Stomach (tissue), 19 donors: ENCODE measurements at regions of chr17 and their contacts with region 1.

Region 1: DNA sequence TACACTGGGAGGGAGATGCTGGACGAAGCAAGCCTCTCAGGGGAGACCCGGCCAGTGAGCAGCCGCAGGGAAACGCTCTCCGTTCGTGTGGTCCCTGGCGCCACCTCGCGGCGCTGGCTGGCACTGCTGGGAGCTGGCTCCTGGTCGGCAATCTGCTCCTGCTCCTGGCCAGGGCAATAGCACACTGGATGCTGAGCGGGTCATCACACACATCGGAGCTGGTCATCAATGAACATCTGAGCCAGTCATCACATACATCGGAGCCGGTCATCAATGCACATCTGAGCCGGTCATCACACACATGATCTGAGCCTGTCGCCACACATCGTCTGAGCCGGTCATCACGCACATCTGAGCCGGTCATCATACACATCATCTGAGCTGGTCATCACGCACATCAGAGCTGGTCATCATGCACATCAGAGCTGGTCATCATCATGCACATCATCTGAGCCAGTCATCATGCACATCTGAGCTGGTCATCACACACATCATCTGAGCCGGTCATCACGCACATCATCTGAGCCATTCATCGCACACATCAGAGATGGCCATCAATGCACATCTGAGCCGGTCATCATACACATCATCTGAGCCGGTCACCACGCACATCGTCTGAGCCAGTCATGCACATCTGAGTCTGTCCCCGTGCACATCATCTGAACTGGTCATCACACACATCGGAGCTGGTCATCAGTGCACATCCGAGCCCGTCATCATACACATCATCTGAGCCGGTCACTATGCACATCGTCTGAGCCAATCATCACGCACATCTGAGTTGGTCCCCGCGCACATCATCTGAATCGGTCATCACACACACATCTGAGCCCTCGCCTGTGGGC is 217.3 kb downstream of the RBFOX3 start:
- DNase-seq: peak; percentile 83 to 92
- H3K4me3 ChIP-seq: no peak overlapping the region
- H3K27ac ChIP-seq: no peak overlapping the region
- H3K4me1 ChIP-seq: peaks cover 0 to 7% (median 2%) of the 10 kb centered on the region in 4 donors
- H3K27me3 ChIP-seq: peaks cover 5 to 98% (median 88%) of the 10 kb centered on the region in 3 donors
- CTCF ChIP-seq: peak in 5 of 7 experiments; percentile 71 to 88 (median 84)
- EP300 ChIP-seq: no peak
- POLR2A ChIP-seq: no peak

Region 2: GRCh38 chr17:79087428-79088143 is 306.0 kb before region 1 on chr17:
- intact Hi-C with region 1: loop called (anchors 5 kb)
- DNase-seq: peak; percentile 79 to 87
- H3K4me3 ChIP-seq: no peak overlapping the region
- H3K27ac ChIP-seq: no peak overlapping the region
- H3K4me1 ChIP-seq: peaks cover 0 to 14% (median 0%) of the 10 kb centered on the region in 4 donors
- H3K27me3 ChIP-seq: peaks cover 0 to 30% (median 21%) of the 10 kb centered on the region in 3 donors
- CTCF ChIP-seq: peak in 5 of 7 experiments; percentile 64 to 95 (median 88)
- EP300 ChIP-seq: no peak
- POLR2A ChIP-seq: no peak

Region 3: GRCh38 chr17:79290726-79291125 is 102.9 kb before region 1 on chr17:
- intact Hi-C with region 1: no loop called
- DNase-seq: no peak
- H3K4me3 ChIP-seq: no peak overlapping the region
- H3K27ac ChIP-seq: no peak overlapping the region
- H3K4me1 ChIP-seq: no peaks in the 10 kb centered on the region
- H3K27me3 ChIP-seq: peaks cover 0 to 72% (median 23%) of the 10 kb centered on the region in 3 donors
- CTCF ChIP-seq: no peak
- EP300 ChIP-seq: no peak
- POLR2A ChIP-seq: no peak